ENCODE measurements at regions of chr19 and their contacts with region 1.

Region 1: GRCh38 chr19:50804420-50805272 is 14.4 kb downstream of the ACP4 start:
- DNase-seq: peak; percentile 94
- ATAC-seq: peak; percentile 98
- H3K4me3 Mint-ChIP-seq: peak overlapping the region; percentile 100
- H3K27ac Mint-ChIP-seq: peak overlapping the region; percentile 100
- H3K4me1 Mint-ChIP-seq: peaks cover 37% of the 10 kb centered on the region
- H3K27me3 Mint-ChIP-seq: no peaks in the 10 kb centered on the region
- CTCF ChIP-seq: no peak

Region 2: GRCh38 chr19:50383852-50384684 is 420.6 kb before region 1 on chr19 and contains the start of gene POLD1:
- CTCF ChIA-PET with region 1: no interaction called
- POLR2A ChIA-PET with region 1: no interaction called
- intact Hi-C with region 1: loop called (anchors 2 kb)
- DNase-seq: peak; percentile 97
- ATAC-seq: peak; percentile 94
- H3K4me3 Mint-ChIP-seq: peak within 1 kb of the TSS; percentile 96
- H3K27ac Mint-ChIP-seq: peak within 1 kb of the TSS; percentile 85
- H3K4me1 Mint-ChIP-seq: peaks cover 28% of the 10 kb centered on the region
- H3K27me3 Mint-ChIP-seq: no peaks in the 10 kb centered on the region
- CTCF ChIP-seq: no peak
- total RNA-seq, gene POLD1: 58.8 and 65.5 TPM in 2 replicates

Region 3: GRCh38 chr19:50724522-50725217 is 80.0 kb before region 1 on chr19:
- CTCF ChIA-PET with region 1: no interaction called
- POLR2A ChIA-PET with region 1: interaction called, 12 read pairs
- intact Hi-C with region 1: no loop called
- DNase-seq: peak; percentile 75
- ATAC-seq: peak; percentile 91
- H3K4me3 Mint-ChIP-seq: peak overlapping the region; percentile 78
- H3K27ac Mint-ChIP-seq: no peak overlapping the region
- H3K4me1 Mint-ChIP-seq: peaks cover 37% of the 10 kb centered on the region
- H3K27me3 Mint-ChIP-seq: peaks cover 66% of the 10 kb centered on the region
- CTCF ChIP-seq: no peak

Region 4: DNA sequence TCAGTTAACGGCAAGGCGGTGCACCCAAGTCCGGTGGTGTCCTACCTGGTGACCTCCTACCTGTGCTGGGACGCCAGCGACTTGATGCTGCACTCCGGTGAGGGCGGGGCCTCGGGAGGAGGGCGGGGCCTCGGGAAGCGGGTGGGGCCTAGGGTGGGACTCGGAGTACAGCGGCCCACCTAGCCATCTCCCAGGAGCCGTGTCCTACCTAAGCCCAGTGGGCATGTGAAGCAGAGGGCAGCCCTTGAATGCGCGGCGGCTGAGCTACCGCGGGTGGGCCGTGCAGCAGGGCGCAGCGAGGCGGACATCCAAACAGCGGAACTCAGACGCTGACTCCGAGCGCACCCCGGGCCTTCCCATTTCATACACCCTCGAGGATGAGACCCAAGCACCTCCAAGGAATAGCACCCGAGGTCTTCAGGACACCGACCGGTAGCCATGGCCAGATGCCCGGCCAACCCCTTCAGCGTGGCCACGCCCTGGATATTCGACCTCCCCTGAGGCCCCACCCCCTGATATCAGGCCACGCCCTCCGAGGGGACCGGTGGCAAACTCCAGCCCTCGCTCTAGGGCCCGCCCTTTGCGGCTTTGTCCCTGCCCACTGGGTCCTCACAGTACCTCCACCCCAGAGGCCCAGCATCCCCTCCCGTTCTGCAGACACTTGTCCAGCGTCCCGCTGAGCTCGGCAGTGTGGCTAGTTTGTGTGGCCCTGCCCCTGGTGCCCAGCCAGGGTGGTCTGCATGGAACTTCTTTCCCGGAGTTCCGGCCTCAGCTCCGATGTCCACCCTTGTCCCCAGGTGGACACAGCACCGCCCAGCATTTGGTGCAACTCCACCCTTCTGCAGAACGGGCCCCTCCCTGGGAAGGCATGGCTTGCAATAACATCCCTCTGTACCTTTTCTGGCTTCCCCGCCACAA is 13.6 kb after region 1 on chr19:
- CTCF ChIA-PET with region 1: no interaction called
- POLR2A ChIA-PET with region 1: interaction called, 30 read pairs
- intact Hi-C with region 1: loop called (anchors 1 kb)
- DNase-seq: peak; percentile 73
- ATAC-seq: peak; percentile 57
- H3K4me3 Mint-ChIP-seq: peak overlapping the region; percentile 88
- H3K27ac Mint-ChIP-seq: peak overlapping the region; percentile 90
- H3K4me1 Mint-ChIP-seq: peaks cover 66% of the 10 kb centered on the region
- H3K27me3 Mint-ChIP-seq: peaks cover 13% of the 10 kb centered on the region
- CTCF ChIP-seq: no peak

Region 5: DNA sequence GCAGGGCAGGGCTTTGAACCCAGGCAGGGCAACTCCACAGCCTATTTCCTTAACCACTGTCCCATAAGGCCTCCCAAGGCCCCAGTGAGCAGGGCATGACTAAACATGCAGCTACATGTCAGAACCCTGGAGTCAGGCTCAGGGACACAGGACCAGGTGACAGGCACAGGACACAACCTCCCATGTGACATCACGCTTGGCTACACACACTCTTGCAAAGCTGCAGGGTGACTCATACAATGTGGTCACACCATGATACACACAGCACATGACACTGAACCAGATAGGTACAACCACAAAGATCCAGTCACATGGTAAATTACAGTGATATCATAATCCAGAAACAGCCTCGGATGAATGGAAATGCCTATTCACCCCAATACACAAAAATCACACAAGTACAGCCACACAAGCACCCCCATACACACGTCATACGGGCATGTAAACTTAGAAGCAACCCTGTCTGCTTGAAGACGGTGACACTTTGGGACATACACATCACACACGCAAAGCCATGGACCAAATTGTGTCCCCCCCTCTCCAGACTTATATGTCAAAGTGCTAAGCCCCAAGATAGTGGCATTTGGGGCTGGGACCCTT is 92.0 kb after region 1 on chr19:
- CTCF ChIA-PET with region 1: no interaction called
- POLR2A ChIA-PET with region 1: interaction called, 11 read pairs
- intact Hi-C with region 1: loop called (anchors 1 kb)
- DNase-seq: peak; percentile 58
- ATAC-seq: peak; percentile 91
- H3K4me3 Mint-ChIP-seq: peak overlapping the region; percentile 24
- H3K27ac Mint-ChIP-seq: peak overlapping the region; percentile 85
- H3K4me1 Mint-ChIP-seq: peaks cover 51% of the 10 kb centered on the region
- H3K27me3 Mint-ChIP-seq: no peaks in the 10 kb centered on the region
- CTCF ChIP-seq: no peak

Region 6: DNA sequence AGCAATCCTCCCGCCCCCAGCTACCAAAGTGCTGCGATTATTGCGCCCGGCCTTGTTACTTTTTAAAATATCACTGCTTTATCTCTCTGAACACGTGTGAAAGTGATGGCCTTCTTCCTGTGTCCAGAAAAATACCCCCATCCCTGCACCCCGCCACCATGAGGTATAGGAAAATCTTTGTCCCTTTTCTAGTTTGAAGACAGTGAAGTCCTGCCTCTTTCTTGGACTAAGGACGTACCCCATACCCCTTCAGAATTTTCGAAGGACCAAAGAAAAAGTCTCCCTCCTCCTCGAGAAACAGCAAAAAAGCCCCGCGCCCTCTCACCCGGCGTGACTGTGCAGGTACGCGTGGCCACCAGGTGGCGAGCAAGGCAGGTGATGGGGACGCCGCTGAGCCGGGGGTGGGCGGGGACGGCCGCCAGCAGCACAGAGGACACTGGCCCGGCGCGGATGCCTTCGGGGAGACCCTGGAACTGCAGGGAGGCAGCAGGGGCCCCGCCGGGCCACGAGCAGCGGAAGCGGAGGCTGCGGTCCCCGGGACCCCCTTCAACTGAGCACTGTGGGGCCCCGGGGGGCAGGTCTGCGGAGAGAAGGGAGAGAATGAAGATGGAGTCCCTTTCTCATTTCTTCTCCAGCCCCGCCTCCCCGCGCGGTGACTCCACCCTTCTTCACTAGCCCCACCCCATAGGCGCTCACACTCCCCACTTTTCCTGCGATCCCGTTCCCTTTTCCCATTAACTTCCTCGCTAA is 534.1 kb after region 1 on chr19:
- CTCF ChIA-PET with region 1: no interaction called
- POLR2A ChIA-PET with region 1: no interaction called
- intact Hi-C with region 1: no loop called
- DNase-seq: peak; percentile 83
- ATAC-seq: peak; percentile 64
- H3K4me3 Mint-ChIP-seq: peak overlapping the region; percentile 91
- H3K27ac Mint-ChIP-seq: peak overlapping the region; percentile 75
- H3K4me1 Mint-ChIP-seq: peaks cover 36% of the 10 kb centered on the region
- H3K27me3 Mint-ChIP-seq: no peaks in the 10 kb centered on the region
- CTCF ChIP-seq: peak; percentile 41

Measured in activated B cell treated with CpG ODN at 0.5 μM for 24 hours (primary cell).